Activated CD8-positive, alpha-beta T cell treated with anti-CD3 and anti-CD28 coated beads for 36 hours (primary cell): ENCODE measurements at regions of chr1 and their contacts with region 1.

Region 1: GRCh38 chr1:45303582-45304310 is 22.9 kb upstream of the HPDL start:
- DNase-seq: peak; percentile 100
- ATAC-seq: peak; percentile 84
- H3K4me3 Mint-ChIP-seq: peak overlapping the region; percentile 91
- H3K27ac Mint-ChIP-seq: peak overlapping the region; percentile 98
- H3K4me1 Mint-ChIP-seq: peaks cover 40% of the 10 kb centered on the region
- H3K27me3 Mint-ChIP-seq: no peaks in the 10 kb centered on the region
- CTCF ChIP-seq: peak; percentile 63

Region 2: DNA sequence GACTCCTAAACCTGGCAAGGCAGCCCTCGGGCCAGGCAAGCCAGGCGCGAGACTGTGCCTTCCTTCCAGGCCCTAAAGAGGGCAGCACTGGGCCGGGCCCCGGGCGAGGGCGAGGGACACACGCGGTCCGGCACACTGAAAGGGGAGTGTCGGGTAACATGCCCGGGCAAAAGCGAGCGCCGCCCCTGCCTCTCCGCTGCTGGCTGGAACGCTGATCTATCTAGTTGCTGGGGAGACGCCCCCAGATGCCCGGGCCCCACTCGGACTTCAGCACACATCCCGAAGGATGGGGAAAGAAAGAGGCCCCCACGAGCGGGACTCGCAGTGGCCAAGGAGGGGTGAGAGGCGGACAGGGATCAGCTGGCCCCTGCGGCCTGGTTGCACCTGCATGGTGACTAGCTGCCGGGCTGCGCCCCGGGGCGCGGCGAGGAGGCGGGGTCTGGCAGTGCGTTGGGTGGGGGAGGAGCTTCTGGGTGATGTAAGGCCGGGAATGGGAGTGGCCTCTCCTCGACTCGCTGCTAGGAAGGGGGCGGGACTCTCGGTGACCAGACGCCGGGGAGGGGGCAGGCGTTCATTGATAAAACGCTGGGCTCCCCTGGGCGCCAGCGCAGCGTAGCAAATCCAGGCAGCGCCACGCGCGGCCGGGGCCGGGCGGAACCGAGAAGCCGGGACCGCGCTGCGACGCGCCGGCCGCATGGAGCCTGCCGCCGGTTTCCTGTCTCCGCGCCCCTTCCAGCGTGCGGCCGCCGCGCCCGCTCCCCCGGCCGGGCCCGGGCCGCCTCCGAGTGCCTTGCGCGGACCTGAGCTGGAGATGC is 503.8 kb before region 1 on chr1 and contains the start of gene PLK3:
- CTCF ChIA-PET with region 1: no interaction called
- POLR2A ChIA-PET with region 1: interaction called, 3 read pairs
- intact Hi-C with region 1: loop called (anchors 10 kb)
- DNase-seq: peak; percentile 99
- ATAC-seq: peak; percentile 90
- H3K4me3 Mint-ChIP-seq: peak within 1 kb of the TSS; percentile 84
- H3K27ac Mint-ChIP-seq: peak within 1 kb of the TSS; percentile 100
- H3K4me1 Mint-ChIP-seq: peaks cover 35% of the 10 kb centered on the region
- H3K27me3 Mint-ChIP-seq: no peaks in the 10 kb centered on the region
- CTCF ChIP-seq: peak; percentile 76
- total RNA-seq, gene PLK3: 36.4 to 36.6 TPM

Region 3: DNA sequence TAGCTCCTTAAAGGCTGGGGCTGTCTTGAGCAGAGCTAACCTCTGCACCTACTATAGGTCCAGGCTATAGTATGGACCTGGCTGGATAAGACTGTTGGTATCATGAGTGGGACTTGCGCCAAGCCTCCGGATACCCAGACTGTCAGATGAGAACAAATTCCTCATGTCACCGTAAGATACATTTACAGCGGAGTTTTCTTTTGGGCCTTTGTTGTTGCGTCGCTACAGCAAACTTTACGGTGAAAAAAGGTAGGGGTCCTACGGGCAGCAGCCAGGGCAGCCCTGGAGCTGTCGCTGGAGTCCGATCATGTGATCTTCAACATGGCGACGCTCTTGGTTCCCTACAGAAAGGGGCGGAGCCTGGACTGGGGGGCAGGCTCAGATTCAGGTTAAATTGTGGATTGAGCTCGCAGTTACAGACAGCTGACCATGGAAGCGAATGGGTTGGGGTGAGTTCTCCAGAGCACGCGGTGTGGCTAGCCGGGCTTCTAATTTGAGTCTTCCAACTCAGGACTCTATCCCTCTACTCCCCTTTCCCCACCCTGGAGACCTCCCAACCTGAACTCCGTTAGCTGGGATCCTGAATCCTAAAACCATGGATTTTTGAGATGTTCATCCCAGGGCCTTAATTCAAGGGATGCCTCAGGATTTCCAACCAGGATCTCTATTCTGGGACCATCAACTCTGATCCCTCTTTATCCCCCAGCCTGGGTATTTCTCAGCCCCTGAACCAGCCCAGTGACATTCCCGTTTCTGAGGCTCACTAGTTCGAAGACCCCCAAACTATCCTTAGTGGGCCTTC is 291.7 kb before region 1 on chr1 and contains the start of gene UROD:
- CTCF ChIA-PET with region 1: interaction called, 321 read pairs
- POLR2A ChIA-PET with region 1: interaction called, 40 read pairs
- intact Hi-C with region 1: loop called (anchors 1 kb)
- DNase-seq: peak; percentile 98
- ATAC-seq: peak; percentile 85
- H3K4me3 Mint-ChIP-seq: peak within 1 kb of the TSS; percentile 77
- H3K27ac Mint-ChIP-seq: peak within 1 kb of the TSS; percentile 92
- H3K4me1 Mint-ChIP-seq: peaks cover 31% of the 10 kb centered on the region
- H3K27me3 Mint-ChIP-seq: no peaks in the 10 kb centered on the region
- CTCF ChIP-seq: no peak
- total RNA-seq, gene UROD: 109 to 113 TPM

Region 4: GRCh38 chr1:45018599-45019230 is 285.0 kb before region 1 on chr1:
- CTCF ChIA-PET with region 1: interaction called, 321 read pairs
- POLR2A ChIA-PET with region 1: interaction called, 40 read pairs
- intact Hi-C with region 1: loop called (anchors 1 kb)
- DNase-seq: peak; percentile 75
- ATAC-seq: peak; percentile 93
- H3K4me3 Mint-ChIP-seq: no peak overlapping the region
- H3K27ac Mint-ChIP-seq: no peak overlapping the region
- H3K4me1 Mint-ChIP-seq: peaks cover 10% of the 10 kb centered on the region
- H3K27me3 Mint-ChIP-seq: no peaks in the 10 kb centered on the region
- CTCF ChIP-seq: peak; percentile 78

Region 5: GRCh38 chr1:45314266-45314665 is 10.5 kb after region 1 on chr1:
- CTCF ChIA-PET with region 1: no interaction called
- POLR2A ChIA-PET with region 1: no interaction called
- intact Hi-C with region 1: no loop called
- DNase-seq: no peak
- ATAC-seq: no peak
- H3K4me3 Mint-ChIP-seq: no peak overlapping the region
- H3K27ac Mint-ChIP-seq: no peak overlapping the region
- H3K4me1 Mint-ChIP-seq: no peaks in the 10 kb centered on the region
- H3K27me3 Mint-ChIP-seq: no peaks in the 10 kb centered on the region
- CTCF ChIP-seq: no peak

Region 6: DNA sequence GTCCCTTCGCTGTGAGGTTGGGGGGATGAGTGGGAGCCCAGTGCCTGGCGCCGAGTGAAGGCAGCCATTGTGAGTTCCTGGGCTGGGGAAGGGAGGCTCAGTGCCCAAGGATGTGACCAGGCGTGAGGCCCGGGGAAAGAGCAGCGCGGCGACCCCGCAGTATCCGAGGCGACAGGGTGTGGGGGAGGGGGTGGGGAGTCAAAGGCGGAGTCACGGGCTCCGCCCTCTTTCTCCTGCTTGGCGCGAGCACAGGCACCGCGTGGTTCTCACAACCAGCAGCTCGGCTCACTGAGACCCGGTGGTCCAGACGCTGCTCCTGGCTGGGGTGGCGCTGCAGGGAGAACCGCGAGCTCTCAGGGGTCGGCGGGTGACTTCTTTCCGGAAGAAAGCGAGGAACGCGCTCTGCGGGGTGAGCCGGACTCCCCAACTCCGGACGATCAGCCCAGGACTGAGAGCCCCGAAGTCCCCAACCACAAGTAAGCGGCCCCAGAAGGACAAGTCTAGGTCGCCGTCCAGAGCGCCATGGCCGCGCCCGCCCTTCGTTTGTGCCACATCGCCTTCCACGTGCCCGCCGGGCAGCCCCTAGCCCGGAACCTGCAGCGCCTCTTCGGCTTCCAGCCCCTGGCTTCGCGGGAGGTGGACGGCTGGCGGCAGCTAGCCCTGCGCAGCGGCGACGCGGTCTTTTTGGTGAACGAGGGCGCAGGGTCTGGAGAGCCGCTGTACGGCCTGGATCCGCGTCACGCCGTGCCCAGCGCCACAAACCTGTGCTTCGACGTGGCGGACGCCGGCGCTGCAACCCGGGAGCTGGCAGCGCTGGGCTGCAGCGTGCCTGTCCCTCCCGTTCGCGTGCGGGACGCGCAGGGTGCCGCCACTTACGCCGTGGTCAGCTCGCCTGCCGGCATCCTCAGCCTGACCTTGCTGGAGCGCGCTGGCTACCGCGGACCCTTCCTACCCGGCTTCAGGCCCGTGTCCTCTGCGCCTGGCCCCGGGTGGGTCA is 23.2 kb after region 1 on chr1 and contains the start of gene HPDL:
- CTCF ChIA-PET with region 1: interaction called, 12 read pairs
- POLR2A ChIA-PET with region 1: interaction called, 37 read pairs
- intact Hi-C with region 1: no loop called
- DNase-seq: peak; percentile 89
- ATAC-seq: peak; percentile 94
- H3K4me3 Mint-ChIP-seq: peak within 1 kb of the TSS; percentile 88
- H3K27ac Mint-ChIP-seq: peak within 1 kb of the TSS; percentile 87
- H3K4me1 Mint-ChIP-seq: peaks cover 11% of the 10 kb centered on the region
- H3K27me3 Mint-ChIP-seq: no peaks in the 10 kb centered on the region
- CTCF ChIP-seq: no peak
- total RNA-seq, gene HPDL: 37.5 to 39.8 TPM

Region 7: DNA sequence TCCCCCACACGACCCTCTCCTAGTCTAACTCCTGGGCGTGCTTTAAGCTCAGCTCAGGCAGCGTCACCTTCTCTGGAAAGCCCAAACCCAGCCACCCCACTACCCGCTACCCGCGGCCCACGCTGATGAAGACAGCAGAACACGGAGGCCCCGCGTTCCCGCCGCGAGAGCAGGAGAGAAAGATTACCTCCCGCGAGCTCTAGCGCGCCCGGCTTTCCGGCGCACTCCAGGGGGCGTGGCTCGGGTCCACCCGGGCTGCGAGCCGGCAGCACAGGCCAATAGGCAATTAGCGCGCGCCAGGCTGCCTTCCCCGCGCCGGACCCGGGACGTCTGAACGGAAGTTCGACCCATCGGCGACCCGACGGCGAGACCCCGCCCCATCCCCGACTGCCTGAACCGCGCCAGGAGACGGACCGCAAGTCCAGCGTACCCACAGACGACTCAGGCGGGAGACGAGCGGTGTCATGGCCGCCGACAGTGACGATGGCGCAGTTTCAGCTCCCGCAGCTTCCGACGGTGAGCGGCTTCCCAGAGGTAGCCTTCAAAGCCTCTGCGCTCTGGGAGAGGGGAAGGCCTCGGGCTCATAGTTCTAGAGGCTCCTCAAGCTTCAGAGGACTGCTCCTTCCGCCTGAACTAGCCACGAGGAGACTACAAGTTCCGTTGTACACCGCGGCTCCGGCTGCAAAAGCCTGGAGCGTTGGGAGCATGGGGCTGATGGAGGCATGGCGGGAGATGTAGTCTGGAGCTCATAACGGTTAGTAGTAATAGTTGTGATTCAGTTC is 36.2 kb after region 1 on chr1 and contains the starts of genes MUTYH and TOE1:
- CTCF ChIA-PET with region 1: interaction called, 8 read pairs
- POLR2A ChIA-PET with region 1: interaction called, 58 read pairs
- intact Hi-C with region 1: loop called (anchors 5 kb)
- DNase-seq: peak; percentile 97
- ATAC-seq: peak; percentile 87
- H3K4me3 Mint-ChIP-seq: peak within 1 kb of the TSS; percentile 99
- H3K27ac Mint-ChIP-seq: peak within 1 kb of the TSS; percentile 99
- H3K4me1 Mint-ChIP-seq: peaks cover 37% of the 10 kb centered on the region
- H3K27me3 Mint-ChIP-seq: no peaks in the 10 kb centered on the region
- CTCF ChIP-seq: no peak
- total RNA-seq, gene MUTYH: 51.4 to 54.5 TPM
- total RNA-seq, gene TOE1: 25.7 to 28.1 TPM